ENCODE measurements at regions of chr4 and their contacts with region 1.

Region 1: GRCh38 chr4:139030614-139031235 is 15.1 kb downstream of the NOCT start:
- DNase-seq: peak; percentile 72 to 76
- H3K4me3 ChIP-seq: no peak overlapping the region
- H3K4me3 Mint-ChIP-seq: no peak overlapping the region
- H3K27ac Mint-ChIP-seq: peak overlapping the region; percentile 45
- H3K4me1 ChIP-seq: peaks cover 7% of the 10 kb centered on the region; the same call in 1 of the 2 replicates
- H3K4me1 Mint-ChIP-seq: peaks cover 21% of the 10 kb centered on the region
- H3K27me3 ChIP-seq: no peaks in the 10 kb centered on the region
- H3K27me3 Mint-ChIP-seq: no peaks in the 10 kb centered on the region
- CTCF ChIP-seq: peak; percentile 73 to 74

Region 2: GRCh38 chr4:138910607-138911336 is 120.0 kb before region 1 on chr4:
- CTCF ChIA-PET with region 1: no interaction called
- POLR2A ChIA-PET with region 1: no interaction called
- intact Hi-C with region 1: no loop called
- DNase-seq: peak; percentile 65 to 71
- H3K4me3 ChIP-seq: no peak overlapping the region
- H3K4me3 Mint-ChIP-seq: peak overlapping the region; percentile 18
- H3K27ac Mint-ChIP-seq: peak overlapping the region; percentile 61
- H3K4me1 ChIP-seq: peaks cover 13% of the 10 kb centered on the region
- H3K4me1 Mint-ChIP-seq: peaks cover 15% of the 10 kb centered on the region
- H3K27me3 ChIP-seq: no peaks in the 10 kb centered on the region
- H3K27me3 Mint-ChIP-seq: no peaks in the 10 kb centered on the region
- CTCF ChIP-seq: no peak

Region 3: DNA sequence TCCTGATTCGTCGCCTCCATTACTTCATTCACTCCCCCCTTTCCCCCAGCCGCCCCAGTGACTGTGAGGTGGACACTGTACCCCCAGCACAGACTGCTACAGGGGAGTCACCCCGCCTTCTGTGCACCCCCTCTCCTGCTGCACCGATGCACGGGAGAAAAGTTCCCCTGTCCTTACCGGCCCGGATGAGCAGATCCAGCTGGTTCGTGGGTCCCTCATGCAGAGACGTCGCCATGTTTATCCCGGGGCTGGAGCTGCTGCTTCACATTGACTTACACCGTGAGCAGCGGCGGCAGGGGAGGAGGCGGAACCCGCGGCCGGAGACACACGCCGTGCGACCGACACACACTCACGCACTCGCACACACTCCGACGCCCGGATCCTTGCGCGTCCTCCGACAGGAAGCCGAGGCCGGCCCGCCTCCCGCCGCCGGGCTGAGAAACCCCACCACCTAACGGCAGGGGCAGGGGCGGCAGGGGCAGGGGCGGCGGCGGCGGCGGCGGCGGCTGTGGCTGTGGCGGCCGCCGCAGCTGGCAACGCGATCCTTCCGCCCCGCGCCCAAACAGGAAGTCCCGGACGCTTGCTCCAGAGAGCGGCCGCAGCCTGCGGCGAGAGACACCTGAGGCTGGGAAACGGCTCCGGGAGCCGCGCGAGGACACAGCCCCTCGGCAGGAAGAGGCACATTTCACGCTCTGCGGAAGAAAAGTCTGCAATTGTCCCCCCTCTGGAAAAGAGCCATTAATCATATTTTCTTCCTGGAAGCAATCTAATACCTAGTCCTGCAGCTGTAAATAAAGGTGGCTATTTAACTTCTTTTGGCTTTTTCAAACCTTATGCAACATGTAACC is 53.5 kb after region 1 on chr4:
- CTCF ChIA-PET with region 1: interaction called, 16 read pairs
- POLR2A ChIA-PET with region 1: no interaction called
- intact Hi-C with region 1: loop called (anchors 1 kb)
- DNase-seq: peak; percentile 91 to 93
- H3K4me3 ChIP-seq: peak overlapping the region; percentile 88
- H3K4me3 Mint-ChIP-seq: peak overlapping the region; percentile 97
- H3K27ac Mint-ChIP-seq: peak overlapping the region; percentile 98
- H3K4me1 ChIP-seq: peaks cover 14% of the 10 kb centered on the region; the same call in 1 of the 2 replicates
- H3K4me1 Mint-ChIP-seq: peaks cover 19% of the 10 kb centered on the region
- H3K27me3 ChIP-seq: no peaks in the 10 kb centered on the region
- H3K27me3 Mint-ChIP-seq: no peaks in the 10 kb centered on the region
- CTCF ChIP-seq: peak; percentile 21

Region 4: GRCh38 chr4:139167774-139168444 is 137.2 kb after region 1 on chr4:
- CTCF ChIA-PET with region 1: interaction called, 8 read pairs
- POLR2A ChIA-PET with region 1: no interaction called
- intact Hi-C with region 1: loop called (anchors 2 kb)
- DNase-seq: peak in 1 of 2 experiments; percentile 59
- H3K4me3 ChIP-seq: no peak overlapping the region
- H3K4me3 Mint-ChIP-seq: no peak overlapping the region
- H3K27ac Mint-ChIP-seq: no peak overlapping the region
- H3K4me1 ChIP-seq: peaks cover 22% of the 10 kb centered on the region
- H3K4me1 Mint-ChIP-seq: peaks cover 12% of the 10 kb centered on the region
- H3K27me3 ChIP-seq: no peaks in the 10 kb centered on the region
- H3K27me3 Mint-ChIP-seq: no peaks in the 10 kb centered on the region
- CTCF ChIP-seq: peak; percentile 55 to 59

Region 5: DNA sequence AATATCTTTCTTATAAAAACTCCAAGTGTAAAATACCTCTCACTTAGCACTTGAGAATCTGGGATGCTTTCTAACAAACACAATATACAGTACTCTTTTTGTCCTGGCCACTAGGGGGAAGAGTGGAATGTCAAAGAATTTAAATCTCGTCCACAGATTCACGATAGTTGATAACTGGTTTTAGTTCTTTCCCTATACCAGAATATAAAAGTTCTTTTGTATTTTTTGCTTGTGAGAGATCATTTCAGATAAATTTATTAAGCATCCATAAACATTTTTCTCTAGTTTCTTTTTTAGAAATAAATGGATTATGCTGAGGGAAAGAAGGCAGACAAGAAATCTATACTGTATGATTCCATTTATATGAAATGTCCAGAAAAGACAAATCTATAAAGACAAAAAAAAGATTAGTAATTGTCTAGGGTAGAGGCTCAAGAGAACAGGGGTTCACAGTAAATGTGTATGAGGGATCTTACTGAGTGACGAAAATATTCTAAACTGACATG is 198.9 kb after region 1 on chr4:
- CTCF ChIA-PET with region 1: interaction called, 3 read pairs
- POLR2A ChIA-PET with region 1: no interaction called
- intact Hi-C with region 1: loop called (anchors 1 kb)
- DNase-seq: peak in 1 of 2 experiments; percentile 46
- H3K4me3 ChIP-seq: no peak overlapping the region
- H3K4me3 Mint-ChIP-seq: no peak overlapping the region
- H3K27ac Mint-ChIP-seq: no peak overlapping the region
- H3K4me1 ChIP-seq: no peaks in the 10 kb centered on the region
- H3K4me1 Mint-ChIP-seq: no peaks in the 10 kb centered on the region
- H3K27me3 ChIP-seq: no peaks in the 10 kb centered on the region
- H3K27me3 Mint-ChIP-seq: no peaks in the 10 kb centered on the region
- CTCF ChIP-seq: peak; percentile 38 to 70

Region 6: DNA sequence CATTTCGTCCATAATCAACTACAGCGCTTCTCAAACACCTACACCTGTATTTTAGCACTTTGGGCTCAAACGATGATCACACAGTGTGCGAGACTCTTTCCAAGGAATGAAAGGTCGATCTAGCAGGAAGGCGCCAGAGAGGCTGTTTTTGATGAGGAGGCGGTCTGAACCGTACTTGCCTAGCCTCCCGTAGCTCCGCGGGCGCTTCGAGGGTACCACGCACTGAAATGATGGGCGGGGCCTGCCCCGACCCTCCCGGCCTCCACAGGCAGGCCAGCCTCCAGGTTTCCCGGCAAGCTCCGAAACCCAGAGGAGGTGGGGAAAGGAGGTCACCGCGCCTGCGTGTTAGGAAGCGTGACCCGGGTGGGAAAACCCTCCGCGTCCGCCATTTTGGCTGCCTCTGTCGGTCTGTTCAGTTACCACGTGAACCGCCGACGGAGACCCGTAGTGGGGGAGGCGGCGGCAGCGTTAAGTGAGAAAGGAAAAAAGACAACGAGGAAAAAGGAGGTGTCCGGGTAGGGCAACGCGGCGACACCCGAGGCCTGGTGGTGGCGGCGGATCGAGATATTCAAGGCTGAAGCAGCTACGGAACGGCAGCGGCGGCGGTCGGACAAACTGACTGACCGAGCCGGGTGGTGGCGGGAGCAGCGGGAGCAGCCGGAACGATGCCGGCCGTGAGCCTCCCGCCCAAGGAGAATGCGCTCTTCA is 270.5 kb after region 1 on chr4 and contains the start of gene NAA15:
- CTCF ChIA-PET with region 1: interaction called, 18 read pairs
- POLR2A ChIA-PET with region 1: no interaction called
- intact Hi-C with region 1: no loop called
- DNase-seq: peak; percentile 98
- H3K4me3 ChIP-seq: peak within 1 kb of the TSS; percentile 99
- H3K4me3 Mint-ChIP-seq: peak within 1 kb of the TSS; percentile 96
- H3K27ac Mint-ChIP-seq: peak within 1 kb of the TSS; percentile 97
- H3K4me1 ChIP-seq: peaks cover 11% of the 10 kb centered on the region
- H3K4me1 Mint-ChIP-seq: no peaks in the 10 kb centered on the region
- H3K27me3 ChIP-seq: no peaks in the 10 kb centered on the region
- H3K27me3 Mint-ChIP-seq: no peaks in the 10 kb centered on the region
- CTCF ChIP-seq: no peak
- total RNA-seq, gene NAA15: 63.1 and 71.6 TPM in 2 replicates